Endothelial cell of umbilical vein (primary cell): ENCODE measurements at regions of chr5 and their contacts with region 1.

Region 1: GRCh38 chr5:101942321-101943215 is 353.5 kb downstream of the SLCO4C1 start:
- DNase-seq: peak; percentile 16
- H3K4me3 ChIP-seq: no peak overlapping the region
- H3K27ac ChIP-seq: no peak overlapping the region
- H3K4me1 ChIP-seq: no peaks in the 10 kb centered on the region
- H3K27me3 ChIP-seq: no peaks in the 10 kb centered on the region
- CTCF ChIP-seq: peak; percentile 11 to 35
- POLR2A ChIP-seq: no peak

Region 2: GRCh38 chr5:101977729-101978345 is 35.3 kb after region 1 on chr5:
- CTCF ChIA-PET with region 1: interaction called, 5 read pairs
- POLR2A ChIA-PET with region 1: no interaction called
- dilution Hi-C with region 1: no loop called
- intact Hi-C with region 1: loop called (anchors 1 kb)
- DNase-seq: peak; percentile 43
- H3K4me3 ChIP-seq: no peak overlapping the region
- H3K27ac ChIP-seq: no peak overlapping the region
- H3K4me1 ChIP-seq: no peaks in the 10 kb centered on the region
- H3K27me3 ChIP-seq: no peaks in the 10 kb centered on the region
- CTCF ChIP-seq: peak; percentile 36 to 48
- POLR2A ChIP-seq: no peak

Region 3: GRCh38 chr5:102153003-102153759 is 210.6 kb after region 1 on chr5:
- CTCF ChIA-PET with region 1: interaction called, 3 read pairs
- POLR2A ChIA-PET with region 1: no interaction called
- dilution Hi-C with region 1: no loop called
- intact Hi-C with region 1: loop called (anchors 5 kb)
- DNase-seq: no peak
- H3K4me3 ChIP-seq: no peak overlapping the region
- H3K27ac ChIP-seq: no peak overlapping the region
- H3K4me1 ChIP-seq: no peaks in the 10 kb centered on the region
- H3K27me3 ChIP-seq: no peaks in the 10 kb centered on the region
- CTCF ChIP-seq: no peak
- POLR2A ChIP-seq: no peak

Region 4: DNA sequence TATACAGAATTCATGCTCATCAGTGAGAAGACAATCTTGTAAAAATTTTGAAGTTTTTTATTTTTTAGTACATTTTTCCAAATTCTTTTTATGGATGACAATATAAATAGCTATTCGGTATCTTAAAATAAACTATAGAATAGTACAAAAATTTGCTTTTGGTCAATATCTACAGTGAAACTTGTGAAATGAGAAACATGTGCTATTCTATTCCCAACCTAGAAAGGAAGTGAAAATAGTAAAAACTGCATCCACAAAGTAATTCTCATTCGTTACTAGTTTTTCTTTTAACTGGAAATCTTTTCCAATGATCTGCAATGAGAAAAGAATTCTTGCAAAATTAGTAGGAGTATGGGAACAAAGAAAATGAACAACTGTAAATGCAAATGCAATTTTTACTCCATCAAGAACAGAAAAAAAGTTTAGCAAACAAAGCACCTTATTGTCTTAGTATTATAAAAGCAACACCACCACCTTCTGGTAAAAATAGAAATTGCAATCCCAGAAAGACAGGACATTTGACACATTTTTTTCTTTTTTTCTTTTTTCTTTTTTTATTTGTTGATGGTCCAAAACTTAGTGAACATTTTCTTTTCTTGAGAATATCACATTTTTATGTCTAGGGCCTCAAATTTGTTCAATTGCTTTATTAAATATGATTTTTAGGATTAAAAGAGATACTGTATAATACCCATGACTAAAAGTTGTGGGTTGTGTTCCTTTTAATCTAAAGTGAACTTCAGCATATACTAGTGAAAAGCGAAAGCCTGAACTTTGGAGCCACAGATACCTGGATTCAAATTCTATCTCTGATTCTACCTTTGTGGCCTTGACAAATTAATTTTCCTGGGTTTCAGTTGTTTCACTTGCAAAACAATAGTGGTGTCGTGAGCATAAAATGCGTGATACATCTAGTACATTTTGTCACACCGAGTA is 281.2 kb after region 1 on chr5:
- CTCF ChIA-PET with region 1: no interaction called
- POLR2A ChIA-PET with region 1: no interaction called
- dilution Hi-C with region 1: no loop called
- intact Hi-C with region 1: loop called (anchors 2 kb)
- DNase-seq: peak; percentile 26
- H3K4me3 ChIP-seq: no peak overlapping the region
- H3K27ac ChIP-seq: no peak overlapping the region
- H3K4me1 ChIP-seq: no peaks in the 10 kb centered on the region
- H3K27me3 ChIP-seq: no peaks in the 10 kb centered on the region
- CTCF ChIP-seq: peak; percentile 22 to 39
- POLR2A ChIP-seq: no peak